Activated T-helper 2 cell treated with anti-CD3 and anti-CD28 coated beads, Interferon-gamma antibody, Interleukin-2, Interleukin-4, amounts not matched to agents 10 μg/mL and 5 μg/mL and 100 μg/mL, durations not matched to agents 14 hours and 24 hours and 36 hours (primary cell): ENCODE measurements at regions of chr10 and their contacts with region 1.

Region 1: DNA sequence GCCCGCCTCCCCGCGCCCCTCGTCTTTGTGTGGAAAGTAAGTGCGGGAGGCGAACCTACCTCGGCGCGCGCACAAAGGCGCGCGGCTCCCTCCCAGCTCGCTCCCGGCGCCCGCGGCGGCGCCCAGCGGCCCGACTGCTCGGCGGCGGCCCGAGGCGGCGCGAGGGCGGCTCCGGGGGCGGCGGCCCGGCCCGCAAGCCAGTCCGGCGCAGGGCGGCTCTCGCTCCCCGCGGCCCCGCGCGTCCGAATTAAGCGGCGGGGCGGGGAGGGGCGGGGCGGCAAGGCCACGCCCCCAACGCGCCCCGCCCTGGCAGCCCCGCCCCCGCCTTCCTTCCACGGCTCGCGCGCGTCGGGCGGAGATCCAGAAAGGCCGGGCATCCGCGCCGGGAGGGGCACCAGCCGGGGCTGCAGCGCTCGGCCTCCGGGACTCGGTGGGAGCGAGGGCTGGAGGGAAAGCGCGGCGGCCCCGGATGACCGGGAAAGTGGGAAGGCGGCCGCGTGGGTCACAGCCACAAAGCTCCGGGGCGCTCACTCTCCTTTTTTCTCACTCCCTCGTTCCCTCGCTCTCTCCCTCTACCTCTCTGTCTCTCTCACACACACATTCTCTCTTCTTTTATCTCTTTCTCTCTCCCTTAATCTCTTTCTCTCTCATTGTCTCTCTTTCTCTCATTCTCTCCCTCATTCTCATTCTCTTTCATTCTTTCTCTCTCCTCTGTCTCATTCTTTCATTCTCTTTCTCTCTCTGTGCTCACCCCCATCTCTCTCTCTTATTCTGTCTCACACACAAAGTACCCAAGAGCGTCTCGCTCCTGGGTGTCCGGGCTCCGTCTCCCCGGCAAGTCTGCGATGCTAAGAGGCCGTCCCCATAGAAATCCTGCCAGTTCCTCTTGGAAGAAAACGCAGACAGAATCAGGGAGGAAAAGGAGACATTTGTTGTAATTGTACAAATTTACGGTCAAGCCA is 170.2 kb downstream of the FAM107B start:
- DNase-seq: peak; percentile 65
- H3K4me3 Mint-ChIP-seq: peak overlapping the region; percentile 97
- H3K27ac Mint-ChIP-seq: peak overlapping the region; percentile 93
- H3K4me1 Mint-ChIP-seq: peaks cover 74% of the 10 kb centered on the region
- H3K27me3 Mint-ChIP-seq: no peaks in the 10 kb centered on the region

Region 2: DNA sequence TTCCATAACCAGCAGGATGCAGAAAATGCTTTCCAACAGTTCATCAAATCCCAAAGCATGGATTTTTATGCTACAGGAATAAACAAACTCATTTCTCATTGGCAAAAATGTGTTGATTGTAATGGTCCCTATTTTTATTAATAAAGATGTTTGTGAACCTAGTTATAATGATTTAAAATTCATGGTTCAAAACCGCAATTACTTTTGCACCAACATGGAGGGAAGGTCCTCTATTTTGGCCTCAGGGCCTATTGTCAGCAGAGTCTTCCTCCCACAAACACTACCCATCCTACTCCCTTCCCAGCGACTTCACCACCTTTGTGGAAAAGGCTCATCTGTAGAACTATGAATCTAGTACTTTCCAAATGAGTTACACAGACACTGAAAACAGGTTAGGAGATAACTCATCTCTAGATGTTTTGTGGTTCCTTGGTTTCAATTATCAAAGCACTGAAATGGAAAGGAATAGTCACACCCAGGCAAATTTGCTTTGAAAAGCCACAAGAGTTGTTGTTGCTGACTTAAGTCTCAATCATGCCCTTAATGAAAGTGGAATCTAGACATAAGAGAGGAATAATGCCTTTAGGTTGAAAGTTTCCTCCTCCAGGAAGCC is 214.4 kb before region 1 on chr10:
- intact Hi-C with region 1: loop called (anchors 1 kb)
- DNase-seq: peak; percentile 14
- H3K4me3 Mint-ChIP-seq: no peak overlapping the region
- H3K27ac Mint-ChIP-seq: no peak overlapping the region
- H3K4me1 Mint-ChIP-seq: peaks cover 24% of the 10 kb centered on the region
- H3K27me3 Mint-ChIP-seq: peaks cover 41% of the 10 kb centered on the region

Region 3: GRCh38 chr10:14588084-14588937 is 16.2 kb before region 1 on chr10:
- intact Hi-C with region 1: loop called (anchors 1 kb)
- DNase-seq: peak; percentile 50
- H3K4me3 Mint-ChIP-seq: peak overlapping the region; percentile 60
- H3K27ac Mint-ChIP-seq: peak overlapping the region; percentile 90
- H3K4me1 Mint-ChIP-seq: peaks cover 81% of the 10 kb centered on the region
- H3K27me3 Mint-ChIP-seq: no peaks in the 10 kb centered on the region

Region 4: GRCh38 chr10:14659626-14660196 is 55.2 kb after region 1 on chr10:
- intact Hi-C with region 1: loop called (anchors 1 kb)
- DNase-seq: peak; percentile 59
- H3K4me3 Mint-ChIP-seq: peak overlapping the region; percentile 66
- H3K27ac Mint-ChIP-seq: peak overlapping the region; percentile 95
- H3K4me1 Mint-ChIP-seq: peaks cover 81% of the 10 kb centered on the region
- H3K27me3 Mint-ChIP-seq: no peaks in the 10 kb centered on the region

Region 5: GRCh38 chr10:14822879-14823755 is 218.7 kb after region 1 on chr10:
- intact Hi-C with region 1: loop called (anchors 5 kb)
- DNase-seq: no peak
- H3K4me3 Mint-ChIP-seq: no peak overlapping the region
- H3K27ac Mint-ChIP-seq: no peak overlapping the region
- H3K4me1 Mint-ChIP-seq: peaks cover 17% of the 10 kb centered on the region
- H3K27me3 Mint-ChIP-seq: peaks cover 18% of the 10 kb centered on the region

Region 6: DNA sequence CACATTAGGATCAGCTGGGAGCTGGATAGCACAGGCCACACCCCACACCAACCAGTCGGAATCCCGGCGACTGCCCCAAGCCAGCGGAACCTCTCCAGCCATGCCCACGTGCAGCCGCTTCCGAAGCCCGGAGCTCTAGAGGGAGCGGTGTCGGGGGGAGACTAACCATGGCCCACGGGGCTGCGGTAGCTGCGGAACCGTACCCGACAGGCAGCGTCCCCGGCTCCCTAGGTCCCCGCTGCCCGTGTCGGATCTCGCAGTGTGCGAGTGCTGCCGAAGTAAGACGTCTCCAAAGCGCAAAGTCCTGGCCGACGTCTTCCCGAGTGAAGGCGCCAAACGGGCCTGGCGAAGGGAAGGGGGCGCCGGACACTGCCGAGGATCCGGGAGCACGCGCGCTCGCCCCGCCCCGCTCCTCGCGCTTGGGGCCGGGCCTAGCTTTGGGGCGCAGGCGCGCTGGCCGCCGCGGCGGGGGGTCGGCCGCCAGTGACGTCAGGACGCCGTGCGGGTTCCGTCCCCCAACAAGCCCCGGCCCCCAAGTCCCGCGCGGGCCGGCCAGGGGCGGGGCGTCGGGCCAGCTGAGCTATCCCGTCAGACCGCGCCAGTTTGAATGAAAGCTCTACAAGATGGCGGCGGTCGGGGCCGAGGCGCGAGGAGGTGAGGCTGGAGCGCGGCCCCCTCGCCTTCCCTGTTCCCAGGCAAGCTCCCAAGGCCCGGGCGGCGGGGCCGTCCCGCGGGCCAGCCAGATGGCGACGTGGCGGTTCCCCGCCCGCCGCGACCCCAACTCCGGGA is 274.0 kb after region 1 on chr10 and contains the start of gene SUV39H2:
- intact Hi-C with region 1: loop called (anchors 2 kb)
- DNase-seq: peak; percentile 93
- H3K4me3 Mint-ChIP-seq: peak within 1 kb of the TSS; percentile 94
- H3K27ac Mint-ChIP-seq: peak within 1 kb of the TSS; percentile 88
- H3K4me1 Mint-ChIP-seq: peaks cover 34% of the 10 kb centered on the region
- H3K27me3 Mint-ChIP-seq: no peaks in the 10 kb centered on the region
- total RNA-seq, gene SUV39H2: 44.0 and 45.0 TPM in 2 replicates

Region 7: DNA sequence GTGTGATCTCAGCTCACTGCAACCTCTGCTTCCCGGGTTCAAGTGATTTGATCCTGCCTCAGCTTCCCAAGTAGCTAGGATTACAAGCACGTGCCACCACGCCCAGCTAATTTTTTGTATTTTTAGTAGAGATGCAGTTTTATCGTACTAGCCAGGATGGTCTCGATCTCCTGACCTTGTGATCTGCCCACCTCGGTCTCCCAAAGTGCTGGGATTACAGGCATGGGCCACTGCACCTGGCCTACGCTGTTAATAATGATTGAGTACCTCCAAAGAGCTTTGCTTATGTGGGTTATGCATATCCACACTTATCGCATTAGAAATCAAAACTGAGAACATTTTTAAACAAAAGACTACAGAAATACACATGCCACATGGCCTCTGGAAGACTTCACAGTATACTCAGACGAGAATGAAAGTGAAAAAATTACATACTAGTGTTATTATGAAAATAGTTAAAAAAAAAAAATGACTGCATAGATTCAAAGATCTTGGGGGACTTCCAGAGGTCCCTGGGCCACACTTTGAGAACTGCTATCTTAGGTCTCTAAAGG is 518.1 kb after region 1 on chr10:
- intact Hi-C with region 1: loop called (anchors 10 kb)
- DNase-seq: no peak
- H3K4me3 Mint-ChIP-seq: peak overlapping the region; percentile 52
- H3K27ac Mint-ChIP-seq: peak overlapping the region; percentile 93
- H3K4me1 Mint-ChIP-seq: peaks cover 40% of the 10 kb centered on the region
- H3K27me3 Mint-ChIP-seq: no peaks in the 10 kb centered on the region